Calu3 (cell line): ENCODE measurements at regions of chr19 and their contacts with region 1.

Region 1: GRCh38 chr19:51904331-51905165 is at the start of gene ZNF649:
- DNase-seq: peak; percentile 87
- H3K4me3 Mint-ChIP-seq: peak within 1 kb of the TSS; percentile 86
- H3K27ac Mint-ChIP-seq: peak within 1 kb of the TSS; percentile 90
- H3K4me1 Mint-ChIP-seq: peaks cover 7% of the 10 kb centered on the region
- H3K27me3 Mint-ChIP-seq: no peaks in the 10 kb centered on the region
- CTCF ChIP-seq: no peak
- total RNA-seq, gene ZNF649: 14.6 and 15.5 TPM in 2 replicates

Region 2: DNA sequence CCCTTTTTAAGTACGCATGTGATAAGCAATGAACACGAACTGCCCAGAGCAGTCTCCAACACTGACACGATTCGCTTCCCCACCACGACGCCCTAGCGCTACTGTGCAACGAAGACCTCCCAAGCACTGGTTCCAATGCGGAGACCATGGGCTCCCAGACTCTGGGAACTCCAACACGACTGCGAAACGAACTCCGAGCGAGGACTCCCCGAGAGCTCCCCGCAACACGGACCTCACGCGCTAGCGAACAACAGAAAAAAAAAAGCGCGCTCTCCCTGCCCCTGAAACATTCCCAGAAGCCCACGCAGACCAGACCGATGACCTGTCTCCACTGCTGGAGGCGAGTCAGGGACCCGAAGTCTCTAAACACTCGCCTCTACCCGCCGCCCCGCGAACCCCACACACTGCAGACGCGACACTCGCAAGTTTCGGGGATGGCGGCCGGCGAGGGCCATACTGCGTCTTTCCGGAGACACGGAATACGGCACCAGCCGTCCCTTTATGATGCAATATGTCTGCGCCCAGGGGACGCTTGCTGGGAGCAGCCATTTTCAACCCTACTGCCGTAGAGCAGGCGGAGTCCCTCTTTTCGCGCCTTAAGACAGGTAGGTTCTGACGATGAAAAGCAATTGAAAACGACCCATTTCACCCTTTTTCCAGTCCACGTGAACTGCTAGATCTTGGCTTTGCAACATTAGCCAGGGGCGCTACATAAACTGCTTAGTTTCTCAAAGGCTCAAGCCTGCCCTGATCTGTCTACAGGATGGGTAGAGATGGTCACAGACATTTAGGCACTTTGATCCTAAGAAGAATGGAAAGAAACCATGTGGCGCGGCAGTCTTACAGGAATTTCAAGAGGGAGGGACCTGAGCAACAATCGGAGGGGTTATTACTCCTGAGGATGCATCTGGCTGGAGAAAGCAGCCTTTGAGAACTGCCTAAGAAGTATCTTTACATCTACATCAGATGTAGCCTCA is 16.7 kb before region 1 on chr19 and contains the start of gene ZNF577:
- CTCF ChIA-PET with region 1: no interaction called
- intact Hi-C with region 1: loop called (anchors 2 kb)
- DNase-seq: peak; percentile 95
- H3K4me3 Mint-ChIP-seq: peak within 1 kb of the TSS; percentile 92
- H3K27ac Mint-ChIP-seq: peak within 1 kb of the TSS; percentile 84
- H3K4me1 Mint-ChIP-seq: peaks cover 16% of the 10 kb centered on the region
- H3K27me3 Mint-ChIP-seq: no peaks in the 10 kb centered on the region
- CTCF ChIP-seq: no peak
- total RNA-seq, gene ZNF577: 15.0 and 16.1 TPM in 2 replicates

Region 3: DNA sequence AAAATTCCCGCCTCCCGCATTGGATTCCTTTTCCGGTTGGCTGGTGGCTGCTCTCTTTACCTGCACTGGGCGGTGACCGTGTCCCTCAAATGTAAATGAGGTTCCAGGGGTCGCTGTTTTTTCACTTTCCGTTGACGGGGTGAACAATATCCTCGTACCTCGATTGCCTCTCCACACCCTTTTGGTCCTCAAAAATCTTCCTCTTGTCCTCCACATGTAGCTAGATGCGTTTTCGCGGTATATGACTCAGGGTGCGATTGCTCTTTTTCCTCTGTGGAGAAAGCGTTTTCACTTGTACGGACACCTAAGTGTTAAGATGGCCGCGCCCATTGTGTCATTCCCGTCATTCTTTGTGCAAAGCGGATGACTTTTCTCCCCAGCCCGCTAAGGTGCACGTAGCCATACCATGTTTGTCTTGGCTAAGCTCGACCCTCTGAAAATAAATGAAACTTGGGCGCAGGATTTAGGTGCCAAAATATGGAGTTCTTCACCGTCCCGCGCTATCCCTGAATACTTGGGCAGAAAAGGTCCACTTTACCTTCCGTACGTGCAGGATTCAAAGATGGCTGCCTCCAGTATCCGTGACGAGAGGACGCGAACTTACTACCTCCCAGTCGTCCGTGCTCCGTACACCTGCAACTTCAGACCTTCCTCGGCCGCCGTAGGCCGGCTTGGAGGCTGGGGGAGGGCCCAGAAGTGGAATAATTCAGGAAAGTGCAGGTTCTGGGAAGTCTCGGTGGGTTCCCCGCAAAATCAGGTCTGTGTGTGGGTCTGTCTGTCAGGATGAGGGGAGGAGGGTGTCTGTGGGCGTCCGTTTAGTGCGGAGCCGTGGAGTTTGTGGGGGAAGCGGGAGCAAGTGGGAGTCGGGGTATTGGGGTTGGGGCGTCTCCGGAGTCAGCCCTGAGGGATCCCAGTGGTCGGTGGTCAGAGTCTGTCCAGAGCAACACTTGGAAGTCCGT is 22.5 kb after region 1 on chr19 and contains the start of gene ZNF613:
- CTCF ChIA-PET with region 1: no interaction called
- intact Hi-C with region 1: loop called (anchors 2 kb)
- DNase-seq: peak; percentile 89
- H3K4me3 Mint-ChIP-seq: peak within 1 kb of the TSS; percentile 79
- H3K27ac Mint-ChIP-seq: peak within 1 kb of the TSS; percentile 72
- H3K4me1 Mint-ChIP-seq: peaks cover 18% of the 10 kb centered on the region
- H3K27me3 Mint-ChIP-seq: no peaks in the 10 kb centered on the region
- CTCF ChIP-seq: no peak
- total RNA-seq, gene ZNF613: 7.2 and 9.3 TPM in 2 replicates